ENCODE measurements at regions of chr18 and their contacts with region 1.

Region 1: DNA sequence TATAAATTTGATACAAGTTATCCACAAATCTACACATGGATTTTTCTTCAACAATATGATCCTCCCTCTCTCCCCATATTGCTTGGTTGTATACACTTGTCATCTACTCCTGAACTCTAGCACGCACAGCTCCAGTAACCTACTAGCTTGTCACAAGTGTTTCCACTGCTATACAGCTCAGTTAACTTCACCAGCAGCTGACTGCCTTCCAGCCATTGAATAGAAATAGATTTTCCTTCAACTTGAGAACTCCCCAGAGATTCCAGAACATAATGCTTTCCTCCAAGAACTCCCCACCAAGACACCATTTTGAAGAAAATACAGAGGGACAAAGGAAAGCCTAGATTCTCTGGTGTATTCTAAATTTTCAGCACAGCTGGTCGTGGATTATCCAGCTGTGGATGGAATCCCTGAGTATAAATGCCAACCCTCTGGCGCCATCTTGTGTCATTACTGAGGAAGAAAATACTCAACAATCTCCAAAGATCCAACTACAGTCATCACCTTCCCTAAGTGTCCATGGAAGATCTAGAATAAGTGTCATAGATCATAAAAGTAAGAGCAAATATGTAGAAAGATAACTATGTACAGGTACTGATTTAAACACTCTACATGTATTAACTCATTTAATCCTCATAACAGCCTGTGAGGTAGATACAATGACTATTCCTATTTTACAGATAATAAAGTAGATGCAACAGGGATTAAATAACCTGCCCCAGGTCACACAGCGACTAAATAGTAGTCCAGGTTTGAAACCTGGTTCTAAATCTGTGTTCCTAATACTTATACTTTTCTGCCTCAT is 156.7 kb downstream of the ARHGAP28 start:
- DNase-seq: peak; percentile 36 to 47
- H3K4me3 ChIP-seq: no peak overlapping the region
- H3K27ac ChIP-seq: no peak overlapping the region
- H3K4me1 ChIP-seq: no peaks in the 10 kb centered on the region
- H3K27me3 ChIP-seq: no peaks in the 10 kb centered on the region
- CTCF ChIP-seq: peak; percentile 38 to 86 (median 70)
- POLR2A ChIP-seq: no peak

Region 2: GRCh38 chr18:6543330-6543908 is 342.8 kb before region 1 on chr18:
- intact Hi-C with region 1: loop called (anchors 5 kb)
- DNase-seq: no peak
- H3K4me3 ChIP-seq: no peak overlapping the region
- H3K27ac ChIP-seq: no peak overlapping the region
- H3K4me1 ChIP-seq: no peaks in the 10 kb centered on the region
- H3K27me3 ChIP-seq: no peaks in the 10 kb centered on the region
- CTCF ChIP-seq: peak; percentile 17 to 67 (median 57)
- POLR2A ChIP-seq: no peak

Region 3: DNA sequence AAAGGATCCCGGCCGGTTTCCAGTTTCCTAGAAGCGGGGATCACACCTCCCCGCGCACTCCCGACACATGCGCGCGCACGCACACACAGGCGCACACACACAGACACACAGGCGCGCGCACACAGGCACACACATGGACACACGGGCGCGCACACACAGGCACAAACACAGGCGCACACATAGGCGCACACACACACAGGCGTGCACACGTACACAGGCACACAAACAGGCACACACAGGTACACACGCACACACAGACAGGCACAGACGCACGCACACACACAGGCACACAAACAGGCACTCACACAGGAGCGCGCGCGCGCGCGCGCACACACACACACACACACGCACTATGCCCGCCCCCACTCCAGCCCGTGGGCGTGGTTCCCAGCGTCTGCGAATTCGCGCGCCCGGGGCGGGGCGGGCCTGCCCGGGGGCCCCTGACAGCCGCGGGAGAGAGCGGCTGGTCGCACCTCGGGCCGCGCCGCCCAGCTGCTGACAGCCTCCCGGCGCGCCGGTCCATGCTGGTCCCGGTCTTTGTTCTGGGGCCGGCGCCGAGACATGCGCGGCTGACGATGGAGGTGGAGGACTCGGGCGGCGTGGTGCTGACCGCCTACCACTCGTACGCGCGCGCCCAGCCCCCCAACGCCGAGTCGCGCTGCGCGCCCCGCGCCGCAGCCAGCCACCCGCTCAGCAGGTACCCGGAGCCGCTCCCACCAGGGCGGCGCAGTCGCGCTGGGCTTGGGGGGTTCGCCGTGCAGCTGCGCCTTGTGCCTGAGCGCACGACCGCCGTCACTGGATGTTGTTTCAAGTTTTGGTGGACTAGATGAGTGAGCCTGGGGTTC is 156.7 kb before region 1 on chr18 and contains the start of gene ARHGAP28:
- intact Hi-C with region 1: loop called (anchors 10 kb)
- DNase-seq: peak; percentile 87 to 90
- H3K4me3 ChIP-seq: peak within 1 kb of the TSS; percentile 24 to 46 (median 26)
- H3K27ac ChIP-seq: peak within 1 kb of the TSS; percentile 51 to 85 (median 79)
- H3K4me1 ChIP-seq: peaks cover 5 to 18% of the 10 kb centered on the region in 2 donors
- H3K27me3 ChIP-seq: no peaks in the 10 kb centered on the region
- CTCF ChIP-seq: peak in 3 of 6 experiments; percentile 44 to 58 (median 44)
- POLR2A ChIP-seq: peak; percentile 4 to 87
- total RNA-seq, gene ARHGAP28: 2.8 to 26.5 (median 9.1) TPM

Measured in thyroid gland (tissue), 4 donors.